ENCODE measurements at regions of chr1 and their contacts with region 1.

Region 1: DNA sequence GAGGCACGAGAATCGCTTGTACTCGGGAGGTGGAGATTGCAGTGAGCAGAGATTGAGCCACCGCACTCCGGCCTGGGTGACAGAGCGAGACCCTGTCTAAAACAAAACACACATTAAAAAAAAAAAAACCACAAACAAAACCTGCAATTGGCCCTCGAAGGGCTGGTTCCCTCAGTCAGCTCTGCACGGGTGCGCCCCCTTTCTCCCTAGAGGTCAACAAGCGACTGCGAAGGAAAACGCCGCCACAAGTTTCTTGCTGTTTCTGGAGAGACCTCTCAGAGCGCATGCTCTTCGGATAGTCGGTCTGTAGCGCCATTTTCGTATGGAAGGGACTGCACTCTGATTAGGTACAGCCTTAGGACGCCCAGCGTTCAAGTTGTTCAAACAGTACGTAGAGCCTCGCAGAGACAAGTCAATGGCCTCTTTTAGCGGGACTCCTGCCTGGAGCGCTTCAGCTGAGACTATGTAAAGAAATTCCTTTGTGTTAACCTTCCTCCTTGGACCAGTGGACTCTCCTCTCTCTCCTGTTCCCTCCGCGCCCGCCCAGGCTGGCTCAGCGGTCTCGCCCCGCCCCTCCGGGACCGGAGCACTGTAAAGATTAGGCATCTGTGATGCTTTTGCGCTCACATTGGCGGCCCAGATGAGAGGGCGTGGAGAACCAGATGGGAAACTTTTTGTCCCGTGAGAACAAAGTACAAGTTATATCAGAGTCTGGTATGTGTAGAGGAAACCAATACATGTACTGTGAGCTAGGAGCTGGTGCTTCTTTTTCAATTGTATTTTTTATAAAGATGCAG is 1.0 kb upstream of the CDC14A start:
- DNase-seq: peak; percentile 88 to 95 (median 89)
- H3K4me3 ChIP-seq: peak overlapping the region; percentile 89 to 94
- H3K4me3 Mint-ChIP-seq: peak overlapping the region; percentile 90 to 100 (median 99)
- H3K27ac ChIP-seq: peak overlapping the region; percentile 85
- H3K27ac Mint-ChIP-seq: peak overlapping the region; percentile 95 to 100 (median 99)
- H3K4me1 ChIP-seq: peaks cover 26% of the 10 kb centered on the region
- H3K4me1 Mint-ChIP-seq: peaks cover 21 to 46% (median 25%) of the 10 kb centered on the region in 4 donors
- H3K27me3 ChIP-seq: no peaks in the 10 kb centered on the region
- H3K27me3 Mint-ChIP-seq: peaks cover 0 to 2% of the 10 kb centered on the region in 2 donors

Region 2: DNA sequence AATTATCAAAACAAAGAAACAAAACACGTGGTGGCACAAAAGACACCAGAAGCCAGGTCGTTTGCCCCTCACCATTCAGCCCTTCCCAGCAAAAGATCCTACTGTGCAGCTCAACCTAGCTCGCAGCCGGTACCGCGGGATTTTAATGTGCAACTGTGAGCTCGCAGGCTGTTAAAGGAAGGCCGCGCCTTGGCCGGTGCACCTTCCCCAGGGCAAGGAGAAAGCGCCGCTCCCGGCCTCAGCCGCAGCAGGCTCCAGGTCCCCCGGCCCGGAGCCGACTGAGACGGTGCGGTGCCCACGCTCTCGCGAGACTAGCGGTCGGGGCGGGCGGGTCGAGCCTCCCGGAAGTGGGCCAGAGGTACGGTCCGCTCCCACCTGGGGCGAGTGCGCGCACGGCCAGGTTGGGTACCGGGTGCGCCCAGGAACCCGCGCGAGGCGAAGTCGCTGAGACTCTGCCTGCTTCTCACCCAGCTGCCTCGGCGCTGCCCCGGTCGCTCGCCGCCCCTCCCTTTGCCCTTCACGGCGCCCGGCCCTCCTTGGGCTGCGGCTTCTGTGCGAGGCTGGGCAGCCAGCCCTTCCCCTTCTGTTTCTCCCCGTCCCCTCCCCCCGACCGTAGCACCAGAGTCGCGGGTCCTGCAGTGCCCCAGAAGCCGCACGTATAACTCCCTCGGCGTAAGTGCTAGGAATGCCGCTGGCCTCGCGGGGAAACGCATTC is 501.4 kb before region 1 on chr1 and contains the start of gene AGL:
- CTCF ChIA-PET with region 1: no interaction called
- POLR2A ChIA-PET with region 1: no interaction called
- intact Hi-C with region 1: loop called (anchors 5 kb)
- DNase-seq: peak; percentile 87 to 89 (median 88)
- H3K4me3 ChIP-seq: peak within 1 kb of the TSS; percentile 61 to 92
- H3K4me3 Mint-ChIP-seq: peak within 1 kb of the TSS; percentile 97 to 99 (median 98)
- H3K27ac ChIP-seq: peak within 1 kb of the TSS; percentile 61
- H3K27ac Mint-ChIP-seq: peak within 1 kb of the TSS; percentile 87 to 97 (median 95)
- H3K4me1 ChIP-seq: peaks cover 18% of the 10 kb centered on the region
- H3K4me1 Mint-ChIP-seq: peaks cover 21 to 34% (median 26%) of the 10 kb centered on the region in 4 donors
- H3K27me3 ChIP-seq: no peaks in the 10 kb centered on the region
- H3K27me3 Mint-ChIP-seq: no peaks in the 10 kb centered on the region
- total RNA-seq, gene AGL: 19.0 to 20.5 TPM

Region 3: GRCh38 chr1:100249537-100250257 is 101.6 kb before region 1 on chr1 and contains the start of gene DBT:
- CTCF ChIA-PET with region 1: no interaction called
- POLR2A ChIA-PET with region 1: interaction called, 33 read pairs
- intact Hi-C with region 1: loop called (anchors 1 kb)
- DNase-seq: peak; percentile 88 to 96 (median 89)
- H3K4me3 ChIP-seq: peak within 1 kb of the TSS; percentile 93 to 95
- H3K4me3 Mint-ChIP-seq: no peak within 1 kb of the TSS
- H3K27ac ChIP-seq: peak within 1 kb of the TSS; percentile 76
- H3K27ac Mint-ChIP-seq: peak within 1 kb of the TSS in 1 of 7 donors; percentile 58
- H3K4me1 ChIP-seq: peaks cover 34% of the 10 kb centered on the region
- H3K4me1 Mint-ChIP-seq: peaks cover 11 to 20% (median 16%) of the 10 kb centered on the region in 4 donors
- H3K27me3 ChIP-seq: no peaks in the 10 kb centered on the region
- H3K27me3 Mint-ChIP-seq: no peaks in the 10 kb centered on the region
- total RNA-seq, gene DBT: 16.1 to 16.8 TPM

Region 4: GRCh38 chr1:100313382-100313781 is 37.9 kb before region 1 on chr1:
- CTCF ChIA-PET with region 1: no interaction called
- POLR2A ChIA-PET with region 1: no interaction called
- intact Hi-C with region 1: no loop called
- DNase-seq: no peak
- H3K4me3 ChIP-seq: no peak overlapping the region
- H3K4me3 Mint-ChIP-seq: no peak overlapping the region
- H3K27ac ChIP-seq: no peak overlapping the region
- H3K27ac Mint-ChIP-seq: peak overlapping the region in 1 of 7 donors; percentile 6
- H3K4me1 ChIP-seq: no peaks in the 10 kb centered on the region
- H3K4me1 Mint-ChIP-seq: no peaks in the 10 kb centered on the region
- H3K27me3 ChIP-seq: no peaks in the 10 kb centered on the region
- H3K27me3 Mint-ChIP-seq: no peaks in the 10 kb centered on the region

Region 5: DNA sequence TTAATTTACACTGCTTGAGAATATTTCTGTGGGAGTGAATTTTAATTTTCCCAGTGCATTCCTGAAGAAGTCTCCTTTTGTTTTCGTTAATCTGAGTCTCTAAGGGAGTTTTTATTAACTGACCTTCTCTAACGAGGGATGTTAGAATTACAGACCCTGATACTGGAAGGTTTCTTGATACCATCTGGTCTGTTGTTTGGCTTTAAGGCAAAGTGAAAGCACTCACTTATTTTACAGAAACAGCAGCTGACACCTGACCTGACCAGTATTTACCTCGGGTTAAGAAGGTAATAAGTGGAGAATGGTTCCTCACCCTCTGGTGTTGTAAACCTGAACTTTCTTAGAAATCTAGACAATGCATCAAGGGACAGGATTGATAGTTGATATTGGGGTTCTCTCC is 13.4 kb after region 1 on chr1:
- CTCF ChIA-PET with region 1: interaction called, 6 read pairs
- POLR2A ChIA-PET with region 1: interaction called, 79 read pairs
- intact Hi-C with region 1: loop called (anchors 2 kb)
- DNase-seq: no peak
- H3K4me3 ChIP-seq: no peak overlapping the region
- H3K4me3 Mint-ChIP-seq: peak overlapping the region; percentile 0 to 83 (median 72)
- H3K27ac ChIP-seq: peak overlapping the region; percentile 19
- H3K27ac Mint-ChIP-seq: peak overlapping the region; percentile 20 to 92 (median 77)
- H3K4me1 ChIP-seq: peaks cover 92% of the 10 kb centered on the region
- H3K4me1 Mint-ChIP-seq: peaks cover 63 to 91% (median 77%) of the 10 kb centered on the region in 4 donors
- H3K27me3 ChIP-seq: no peaks in the 10 kb centered on the region
- H3K27me3 Mint-ChIP-seq: no peaks in the 10 kb centered on the region

Region 6: DNA sequence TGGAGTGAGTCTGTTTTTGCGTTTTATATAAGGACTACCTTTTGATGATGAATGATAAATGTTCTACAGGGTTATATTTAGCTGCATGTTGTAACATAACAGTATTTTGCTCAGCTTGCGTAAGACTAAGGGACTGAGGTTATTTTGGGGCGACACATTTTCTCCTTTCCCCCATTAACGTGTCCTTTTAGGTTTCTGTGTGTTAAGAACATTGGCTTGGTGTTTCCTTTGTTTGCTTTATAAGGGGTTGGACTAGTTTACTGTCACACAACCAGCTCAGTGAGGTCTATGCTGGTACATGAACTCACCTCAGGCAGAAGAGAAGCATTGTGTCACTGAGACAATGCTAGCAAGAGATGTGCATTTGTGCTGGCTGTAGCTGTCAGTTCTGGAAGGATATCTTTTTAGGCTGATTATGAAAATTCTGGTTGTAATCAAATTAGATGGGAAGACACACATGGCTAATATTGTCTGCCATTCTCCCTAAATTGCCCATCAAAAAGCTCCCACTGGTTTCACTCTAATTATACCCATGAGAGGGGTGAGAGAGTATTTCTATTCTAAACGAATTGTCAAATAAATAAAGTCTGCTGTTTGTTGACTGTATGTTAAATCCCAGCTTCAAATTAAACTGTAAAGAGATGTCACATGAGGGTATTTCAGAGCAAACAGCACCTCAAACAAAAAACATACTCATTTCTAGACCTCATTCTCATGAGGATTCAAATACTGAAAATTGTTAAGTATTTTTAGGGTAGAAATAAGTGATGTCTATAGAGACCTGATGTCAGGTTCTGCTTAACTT is 63.6 kb after region 1 on chr1:
- CTCF ChIA-PET with region 1: interaction called, 6 read pairs
- POLR2A ChIA-PET with region 1: interaction called, 63 read pairs
- intact Hi-C with region 1: no loop called
- DNase-seq: peak; percentile 39 to 55 (median 50)
- H3K4me3 ChIP-seq: peak overlapping the region in 1 of 2 donors; percentile 2
- H3K4me3 Mint-ChIP-seq: peak overlapping the region in 7 of 8 donors; percentile 29 to 87 (median 70)
- H3K27ac ChIP-seq: peak overlapping the region; percentile 48
- H3K27ac Mint-ChIP-seq: peak overlapping the region; percentile 73 to 96 (median 89)
- H3K4me1 ChIP-seq: peaks cover 96% of the 10 kb centered on the region
- H3K4me1 Mint-ChIP-seq: peaks cover 70 to 89% (median 79%) of the 10 kb centered on the region in 4 donors
- H3K27me3 ChIP-seq: no peaks in the 10 kb centered on the region
- H3K27me3 Mint-ChIP-seq: no peaks in the 10 kb centered on the region

Region 7: DNA sequence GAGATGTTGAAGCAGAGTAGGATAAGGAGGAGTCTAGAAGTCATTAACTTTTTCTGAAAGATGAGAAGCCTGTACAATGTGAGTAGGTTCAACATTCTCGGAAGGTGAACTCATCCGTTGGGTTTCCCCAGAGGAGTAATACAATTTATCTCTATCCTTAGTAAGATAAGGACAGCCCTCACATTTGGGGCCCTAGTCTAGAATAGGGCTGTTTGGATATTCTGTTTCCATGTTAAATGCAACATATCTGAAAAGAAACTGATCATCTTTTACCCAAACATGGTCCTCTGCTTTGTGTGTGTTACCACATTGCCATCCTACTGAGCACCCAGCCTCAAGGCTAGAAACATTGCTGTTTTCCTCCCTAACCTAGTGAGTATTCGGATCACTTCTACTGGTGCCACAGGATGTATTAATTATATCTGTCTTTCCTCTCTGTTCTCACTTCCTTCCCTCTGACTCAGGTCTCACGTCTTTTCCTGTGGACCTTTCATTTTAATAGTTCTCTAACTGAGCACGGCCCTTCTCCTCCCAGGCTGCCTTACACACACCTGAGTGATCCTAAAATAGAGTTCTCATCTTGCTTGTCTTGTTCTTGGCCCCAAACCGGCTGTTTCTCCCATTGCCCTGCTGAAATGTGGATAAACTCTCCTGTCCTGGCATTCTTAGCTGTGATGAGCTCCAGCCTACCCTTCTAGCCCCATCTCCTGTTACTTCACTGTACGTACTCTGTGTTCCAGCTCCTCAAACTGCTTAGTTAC is 92.7 kb after region 1 on chr1:
- CTCF ChIA-PET with region 1: interaction called, 8 read pairs
- POLR2A ChIA-PET with region 1: interaction called, 72 read pairs
- intact Hi-C with region 1: loop called (anchors 1 kb)
- DNase-seq: peak; percentile 52 to 69 (median 61)
- H3K4me3 ChIP-seq: peak overlapping the region; percentile 8 to 26
- H3K4me3 Mint-ChIP-seq: peak overlapping the region; percentile 74 to 91 (median 80)
- H3K27ac ChIP-seq: peak overlapping the region; percentile 96
- H3K27ac Mint-ChIP-seq: peak overlapping the region; percentile 98 to 100 (median 99)
- H3K4me1 ChIP-seq: peaks cover 99% of the 10 kb centered on the region
- H3K4me1 Mint-ChIP-seq: peaks cover 65 to 93% (median 75%) of the 10 kb centered on the region in 4 donors
- H3K27me3 ChIP-seq: no peaks in the 10 kb centered on the region
- H3K27me3 Mint-ChIP-seq: no peaks in the 10 kb centered on the region

Region 8: DNA sequence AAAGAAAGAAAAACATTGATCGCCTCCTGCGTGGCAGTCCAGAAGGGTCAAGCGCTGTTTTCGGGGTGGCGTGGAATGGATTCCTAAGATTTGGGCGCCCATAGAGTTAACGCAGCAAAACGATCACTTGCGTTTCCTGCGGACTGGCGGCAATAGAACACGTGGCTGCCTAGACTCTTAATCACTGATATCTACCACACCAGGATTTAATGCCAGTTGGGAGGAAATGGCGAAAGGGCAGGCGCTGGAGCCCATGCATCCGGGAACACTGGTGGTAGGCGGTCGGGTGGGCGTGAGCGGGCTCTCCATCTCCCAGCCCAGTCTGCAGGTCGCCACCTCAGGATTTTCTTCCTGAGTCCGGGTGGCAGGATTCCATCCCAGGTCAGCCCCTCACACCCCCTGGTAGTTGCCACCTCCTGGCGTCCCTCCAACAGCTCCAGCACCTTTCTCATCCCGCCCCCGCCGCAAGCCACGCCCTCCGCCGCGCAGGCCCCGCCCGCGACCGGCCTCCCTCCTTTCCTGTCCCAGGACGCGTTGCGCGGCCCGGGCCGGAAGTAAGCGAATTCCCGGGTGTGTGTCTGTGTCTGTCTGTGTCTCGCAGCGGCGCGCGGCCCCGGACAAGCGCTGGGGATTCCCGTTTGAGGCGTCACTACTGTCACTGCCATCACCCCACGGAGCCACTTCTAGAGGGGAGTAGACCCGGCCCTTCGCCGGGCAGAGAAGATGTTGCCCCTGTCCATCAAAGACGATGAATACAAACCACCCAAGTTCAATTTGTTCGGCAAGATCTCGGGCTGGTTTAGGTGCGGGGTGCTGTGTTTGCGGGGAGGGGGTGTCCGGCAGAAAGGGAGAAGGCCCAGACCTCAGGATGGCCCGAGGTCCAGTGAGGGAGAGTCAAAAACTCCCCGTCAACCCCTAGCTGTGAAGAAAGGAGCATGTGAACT is 544.5 kb after region 1 on chr1 and contains the start of gene SLC30A7:
- CTCF ChIA-PET with region 1: no interaction called
- POLR2A ChIA-PET with region 1: no interaction called
- intact Hi-C with region 1: loop called (anchors 1 kb)
- DNase-seq: peak; percentile 93 to 98 (median 95)
- H3K4me3 ChIP-seq: peak within 1 kb of the TSS; percentile 96 to 98
- H3K4me3 Mint-ChIP-seq: peak within 1 kb of the TSS; percentile 94 to 100 (median 100)
- H3K27ac ChIP-seq: peak within 1 kb of the TSS; percentile 100
- H3K27ac Mint-ChIP-seq: peak within 1 kb of the TSS; percentile 99 to 100 (median 100)
- H3K4me1 ChIP-seq: peaks cover 44% of the 10 kb centered on the region
- H3K4me1 Mint-ChIP-seq: peaks cover 28 to 60% (median 39%) of the 10 kb centered on the region in 4 donors
- H3K27me3 ChIP-seq: no peaks in the 10 kb centered on the region
- H3K27me3 Mint-ChIP-seq: no peaks in the 10 kb centered on the region
- total RNA-seq, gene SLC30A7: 54.9 TPM

Measured in CD4-positive, alpha-beta memory T cell (primary cell).